Calu3 (cell line): ENCODE measurements at regions of chr4 and their contacts with region 1.

Region 1: DNA sequence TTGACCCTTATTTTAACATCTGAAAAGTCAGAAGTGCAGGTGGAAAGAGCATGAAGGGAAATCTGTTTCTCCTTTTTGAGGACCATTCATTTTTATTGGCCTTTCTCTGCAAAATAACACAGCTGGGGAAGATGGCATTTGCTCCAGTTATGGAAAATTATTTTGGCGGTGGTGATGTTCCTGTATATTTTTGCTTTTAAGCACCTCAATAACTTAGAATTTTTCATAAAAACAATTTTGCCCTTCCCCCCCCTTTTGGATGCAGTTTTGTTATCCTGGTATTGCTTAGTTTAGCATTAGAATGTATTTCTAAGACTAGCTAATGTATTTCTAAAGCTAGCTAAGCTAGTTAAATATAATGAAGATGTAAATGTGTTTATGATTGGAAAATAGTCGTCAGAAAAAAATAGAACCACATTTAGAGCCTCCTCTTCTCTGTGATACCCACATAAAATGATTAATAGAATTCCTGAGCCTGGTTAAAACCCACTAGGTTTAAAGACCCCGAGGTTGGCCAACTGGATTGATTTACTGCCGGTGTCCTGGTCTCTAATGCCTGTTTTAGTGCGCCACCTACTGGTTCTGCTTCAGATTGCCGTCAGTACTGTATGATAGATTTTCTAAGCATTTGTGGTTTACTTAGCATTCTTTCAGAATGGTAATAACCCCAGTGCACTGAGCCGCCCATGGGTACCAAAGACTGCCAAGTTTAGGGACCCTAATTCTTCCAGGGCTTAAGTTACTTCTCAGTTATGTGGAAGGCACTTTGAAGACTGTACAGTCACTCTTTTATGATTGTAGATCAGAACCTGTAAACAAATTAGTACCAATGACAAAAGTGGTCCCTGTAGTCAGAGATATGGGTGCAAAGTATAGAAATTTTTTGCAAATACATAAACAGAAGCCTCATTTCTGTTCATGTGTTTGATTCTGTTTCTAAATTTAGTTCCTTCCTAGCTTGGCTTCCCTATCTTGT is 11.4 kb downstream of the KLF3 start:
- DNase-seq: peak; percentile 77
- H3K4me3 Mint-ChIP-seq: peak overlapping the region; percentile 55
- H3K27ac Mint-ChIP-seq: peak overlapping the region; percentile 55
- H3K4me1 Mint-ChIP-seq: peaks cover 82% of the 10 kb centered on the region
- H3K27me3 Mint-ChIP-seq: no peaks in the 10 kb centered on the region
- CTCF ChIP-seq: peak; percentile 79

Region 2: GRCh38 chr4:38062088-38062893 is 613.1 kb before region 1 on chr4:
- CTCF ChIA-PET with region 1: no interaction called
- intact Hi-C with region 1: loop called (anchors 5 kb)
- DNase-seq: peak; percentile 67
- H3K4me3 Mint-ChIP-seq: peak overlapping the region; percentile 35
- H3K27ac Mint-ChIP-seq: peak overlapping the region; percentile 38
- H3K4me1 Mint-ChIP-seq: peaks cover 8% of the 10 kb centered on the region
- H3K27me3 Mint-ChIP-seq: no peaks in the 10 kb centered on the region
- CTCF ChIP-seq: peak; percentile 73

Region 3: GRCh38 chr4:38190717-38191178 is 484.7 kb before region 1 on chr4:
- CTCF ChIA-PET with region 1: no interaction called
- intact Hi-C with region 1: loop called (anchors 2 kb)
- DNase-seq: no peak
- H3K4me3 Mint-ChIP-seq: no peak overlapping the region
- H3K27ac Mint-ChIP-seq: no peak overlapping the region
- H3K4me1 Mint-ChIP-seq: peaks cover 23% of the 10 kb centered on the region
- H3K27me3 Mint-ChIP-seq: no peaks in the 10 kb centered on the region
- CTCF ChIP-seq: no peak

Region 4: DNA sequence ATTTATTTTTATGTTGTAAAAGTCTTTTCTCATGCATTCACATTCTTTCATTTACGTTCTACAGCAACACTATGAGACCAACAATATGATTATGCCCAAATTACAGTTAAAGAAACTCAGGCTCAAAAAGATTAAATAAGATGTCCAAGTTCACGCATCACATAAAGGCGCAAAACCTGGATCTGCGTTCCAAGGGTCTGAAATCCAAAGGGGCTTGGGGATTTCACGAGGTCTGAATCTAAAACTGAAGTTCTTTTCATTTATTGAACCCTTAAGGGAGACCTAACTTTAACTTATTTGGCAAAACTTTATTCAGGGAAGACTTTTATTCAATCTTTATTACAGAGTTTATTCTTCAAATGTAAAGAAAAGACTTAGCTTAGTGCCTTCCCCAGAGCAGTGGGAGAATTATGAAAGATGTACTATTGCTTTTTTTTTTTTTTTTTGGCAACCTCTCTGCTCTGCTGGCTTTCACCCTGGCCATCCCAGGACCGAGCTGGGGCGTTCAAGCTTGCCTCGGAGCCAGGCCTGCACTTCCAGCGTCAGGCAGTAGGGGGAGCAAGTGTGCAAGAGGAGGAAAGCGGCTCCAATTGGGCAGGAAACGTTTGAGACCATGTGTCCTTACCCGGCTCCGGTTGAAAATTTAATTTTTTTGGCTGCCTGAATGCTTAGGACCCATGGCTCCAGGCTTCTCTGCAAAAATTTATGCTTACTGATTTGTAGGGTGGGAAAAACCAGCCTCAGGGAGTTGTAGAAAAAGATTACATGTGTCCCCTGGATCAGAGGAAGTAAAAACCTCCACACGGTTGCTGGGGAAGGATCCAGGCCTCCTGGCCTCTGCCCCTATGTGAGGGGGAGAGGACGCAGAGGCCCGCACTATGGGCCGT is 355.7 kb before region 1 on chr4:
- CTCF ChIA-PET with region 1: interaction called, 14 read pairs
- intact Hi-C with region 1: loop called (anchors 2 kb)
- DNase-seq: peak; percentile 92
- H3K4me3 Mint-ChIP-seq: no peak overlapping the region
- H3K27ac Mint-ChIP-seq: peak overlapping the region; percentile 77
- H3K4me1 Mint-ChIP-seq: peaks cover 51% of the 10 kb centered on the region
- H3K27me3 Mint-ChIP-seq: no peaks in the 10 kb centered on the region
- CTCF ChIP-seq: peak; percentile 85

Region 5: DNA sequence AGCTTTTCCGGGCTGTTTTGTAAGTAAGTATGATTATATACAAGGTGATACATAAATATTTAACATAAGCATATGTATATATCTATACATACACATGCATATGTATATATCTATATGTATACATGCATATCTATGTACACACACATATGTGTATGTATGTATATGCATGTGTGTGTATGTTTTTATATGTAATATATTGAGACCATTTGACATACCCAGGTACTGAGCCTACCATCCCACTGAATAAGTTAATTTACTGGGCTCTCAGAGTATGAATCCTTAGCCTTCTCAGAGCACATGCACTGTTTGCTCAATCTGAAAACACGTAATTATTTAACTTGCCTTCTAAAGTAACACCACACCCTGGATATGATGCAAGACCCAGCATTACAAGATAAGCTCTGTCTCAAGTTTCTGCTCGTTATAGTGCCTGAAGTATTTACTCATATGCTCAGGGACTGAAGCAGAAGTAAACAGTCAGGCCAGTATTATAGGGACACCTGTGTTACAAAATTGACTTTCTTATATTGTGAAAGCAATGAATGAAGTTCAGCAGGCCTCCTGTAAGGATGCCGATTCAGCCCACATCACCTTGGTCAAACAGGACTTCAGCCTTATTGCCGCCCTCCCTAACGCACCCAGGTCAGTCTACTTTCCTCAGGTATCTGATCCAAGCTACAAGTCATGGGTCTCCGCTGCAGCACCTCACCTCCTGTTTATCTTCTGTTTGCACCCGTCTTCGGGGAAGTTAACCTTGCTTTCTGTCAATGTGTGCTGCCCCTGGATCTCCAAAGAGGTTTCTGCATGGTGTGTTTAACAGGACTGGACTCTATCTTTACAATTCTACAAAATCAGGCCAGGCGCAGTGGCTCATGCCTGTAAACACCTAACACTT is 54.4 kb before region 1 on chr4:
- CTCF ChIA-PET with region 1: no interaction called
- intact Hi-C with region 1: loop called (anchors 2 kb)
- DNase-seq: peak; percentile 62
- H3K4me3 Mint-ChIP-seq: no peak overlapping the region
- H3K27ac Mint-ChIP-seq: peak overlapping the region; percentile 83
- H3K4me1 Mint-ChIP-seq: peaks cover 44% of the 10 kb centered on the region
- H3K27me3 Mint-ChIP-seq: no peaks in the 10 kb centered on the region
- CTCF ChIP-seq: no peak